ENCODE measurements at regions of chr11 and their contacts with region 1.

Region 1: DNA sequence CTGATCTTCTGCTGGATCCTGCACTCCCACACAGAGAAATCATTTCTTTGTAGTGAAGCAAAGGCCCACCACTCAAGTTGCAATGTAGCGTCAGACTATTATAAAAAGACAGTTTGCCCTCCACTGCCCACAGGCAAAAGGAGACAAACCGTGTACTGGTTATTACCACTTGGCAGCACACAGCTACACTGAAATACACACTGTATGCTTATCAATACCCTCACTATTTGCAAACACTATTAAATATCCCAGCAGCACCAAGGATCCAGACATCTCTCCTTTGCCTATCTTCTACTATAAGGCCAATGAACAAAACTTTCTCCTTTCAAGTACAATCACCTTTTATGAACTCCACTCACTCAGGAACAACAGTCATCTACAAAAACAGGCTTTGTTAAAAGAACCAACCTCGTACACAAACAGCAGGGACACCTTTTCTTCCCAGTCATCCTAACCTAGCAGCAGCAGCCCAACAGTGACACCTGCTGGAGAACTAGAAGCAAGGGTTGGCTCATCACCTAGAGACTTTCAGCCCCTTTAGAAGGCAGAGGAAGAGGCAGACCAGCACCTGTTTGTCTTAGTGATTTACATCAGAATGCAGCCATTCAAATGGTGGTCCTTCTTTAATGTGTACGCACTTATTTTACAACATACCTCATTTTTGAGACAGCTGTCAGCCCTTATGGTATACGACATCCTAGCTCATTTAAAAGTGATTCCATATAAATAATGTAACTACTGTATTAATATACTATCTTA is 56.1 kb downstream of the AMBRA1 start:
- DNase-seq: peak; percentile 70
- H3K4me3 ChIP-seq: no peak overlapping the region
- H3K27ac ChIP-seq: no peak overlapping the region
- H3K4me1 ChIP-seq: no peaks in the 10 kb centered on the region
- H3K27me3 ChIP-seq: no peaks in the 10 kb centered on the region
- CTCF ChIP-seq: peak; percentile 58 to 83 (median 80)
- POLR2A ChIP-seq: no peak

Region 2: DNA sequence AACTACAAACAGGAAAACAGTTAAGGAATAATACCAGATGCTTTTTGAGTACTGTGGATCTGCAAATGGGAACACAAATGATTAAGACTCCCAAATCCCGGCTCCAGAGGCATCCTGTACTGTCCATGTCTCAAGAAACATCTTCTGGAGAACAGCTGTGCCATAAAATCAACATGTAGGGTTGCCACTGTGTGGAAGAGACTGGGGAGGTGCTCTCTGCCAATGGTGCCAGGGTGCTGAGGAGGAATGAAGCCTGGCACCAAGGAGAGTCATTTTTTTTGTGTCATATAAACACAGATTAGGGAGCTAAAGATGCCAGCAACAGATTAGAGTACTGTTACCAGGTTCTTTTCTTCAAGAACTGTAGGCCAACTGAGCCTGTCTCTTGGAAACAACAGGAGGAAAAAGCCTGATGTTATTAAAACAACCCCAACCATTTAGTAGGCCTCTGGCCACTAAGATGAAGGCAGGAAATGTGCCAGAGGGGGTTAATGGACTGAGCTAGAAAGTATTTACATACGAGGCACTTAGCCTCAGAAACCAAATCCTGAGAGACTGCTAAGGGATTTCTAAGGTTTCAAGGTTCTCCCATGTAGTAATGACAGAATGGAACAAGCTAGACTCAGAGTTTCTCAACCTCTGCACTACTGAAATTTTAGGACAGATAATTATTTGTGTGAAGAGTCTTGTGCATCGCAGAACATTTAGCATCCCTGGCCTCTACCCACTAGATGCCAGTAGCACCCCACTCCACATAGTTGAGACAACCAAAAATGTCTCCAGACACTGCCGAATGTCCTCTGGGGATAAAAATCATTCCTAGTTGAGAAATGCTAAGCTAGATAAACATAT is 91.6 kb before region 1 on chr11:
- intact Hi-C with region 1: loop called (anchors 5 kb)
- DNase-seq: no peak
- H3K4me3 ChIP-seq: no peak overlapping the region
- H3K27ac ChIP-seq: no peak overlapping the region
- H3K4me1 ChIP-seq: no peaks in the 10 kb centered on the region
- H3K27me3 ChIP-seq: no peaks in the 10 kb centered on the region
- CTCF ChIP-seq: no peak
- POLR2A ChIP-seq: no peak